Astrocyte of the cerebellum (primary cell): ENCODE measurements at regions of chr19 and their contacts with region 1.

Region 1: DNA sequence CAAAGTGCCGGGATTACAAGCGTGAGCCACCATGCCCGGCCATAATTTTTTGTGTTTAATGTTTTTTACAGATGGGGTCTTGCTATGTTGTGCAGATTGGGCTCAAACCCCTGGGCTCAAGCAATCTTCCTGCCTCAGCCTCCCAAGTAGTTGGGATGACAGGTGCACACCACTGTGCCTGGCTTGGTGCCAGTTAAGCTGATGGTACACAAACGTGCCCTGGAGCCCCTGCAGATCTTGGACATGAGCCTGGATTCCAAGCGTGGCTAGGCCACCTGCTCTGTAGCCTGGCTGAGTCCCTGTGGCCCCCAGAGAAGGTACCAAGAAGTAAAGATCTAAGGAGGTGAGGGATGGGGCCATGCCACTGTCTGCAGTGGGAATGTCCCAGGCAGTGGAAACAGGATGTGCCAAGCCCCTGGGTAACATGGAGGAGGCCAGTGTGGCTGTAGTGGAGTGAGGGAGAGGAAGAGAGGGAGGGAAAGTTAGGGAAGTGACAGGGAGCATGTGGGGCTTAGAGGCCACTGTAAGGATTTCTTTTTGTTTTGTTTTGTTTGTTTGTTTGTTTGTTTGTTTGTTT is 7.0 kb downstream of the PRODH2 start:
- DNase-seq: no peak
- H3K4me3 ChIP-seq: no peak overlapping the region
- CTCF ChIP-seq: no peak

Region 2: DNA sequence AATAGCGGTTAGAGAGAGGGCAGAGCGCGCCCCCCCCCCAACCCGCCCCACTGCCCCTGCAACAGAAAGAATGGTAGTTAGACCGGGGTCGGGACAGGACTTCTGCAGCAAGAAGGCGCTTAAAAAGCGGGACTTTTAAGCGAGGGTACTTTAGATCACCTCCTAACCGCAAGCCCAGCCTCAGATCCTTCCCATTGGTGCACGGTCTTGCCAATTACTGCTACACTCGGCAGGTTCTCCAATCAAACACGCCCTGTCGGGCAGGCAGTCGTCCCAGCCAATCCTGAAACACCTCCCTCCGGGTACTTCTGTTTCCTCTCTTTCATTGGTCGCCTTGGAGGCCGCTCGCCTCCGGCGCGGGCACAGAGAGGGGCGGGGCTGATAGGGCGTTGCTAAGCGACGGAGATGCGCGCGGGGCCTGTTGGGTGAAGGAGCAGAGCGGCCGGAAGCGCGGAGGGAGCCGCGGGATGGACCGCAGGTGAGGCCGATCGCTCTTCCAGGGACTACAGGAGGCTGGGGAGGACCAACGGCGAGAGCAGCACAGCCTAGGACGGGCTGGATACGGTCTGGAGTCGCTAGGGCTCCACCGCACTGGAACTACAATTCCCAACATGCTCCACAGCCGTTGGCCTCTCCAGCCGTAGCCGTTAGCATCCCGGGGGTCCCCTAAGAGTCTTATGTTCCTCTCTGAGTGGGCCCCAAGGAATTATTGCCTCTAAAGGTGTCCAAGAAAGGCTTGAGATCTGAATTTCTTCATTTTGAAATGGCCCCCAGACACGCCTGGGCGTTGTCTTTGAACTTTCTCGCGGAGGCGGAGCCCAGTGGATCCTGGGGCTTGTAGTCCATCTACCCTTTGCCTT is 47.6 kb before region 1 on chr19 and contains the start of gene PROSER3:
- in situ Hi-C with region 1: no loop called
- DNase-seq: peak; percentile 99
- H3K4me3 ChIP-seq: peak within 1 kb of the TSS; percentile 94
- CTCF ChIP-seq: no peak

Region 3: GRCh38 chr19:35911790-35912189 is 106.2 kb after region 1 on chr19:
- in situ Hi-C with region 1: no loop called
- DNase-seq: no peak
- H3K4me3 ChIP-seq: no peak overlapping the region
- CTCF ChIP-seq: no peak

Region 4: DNA sequence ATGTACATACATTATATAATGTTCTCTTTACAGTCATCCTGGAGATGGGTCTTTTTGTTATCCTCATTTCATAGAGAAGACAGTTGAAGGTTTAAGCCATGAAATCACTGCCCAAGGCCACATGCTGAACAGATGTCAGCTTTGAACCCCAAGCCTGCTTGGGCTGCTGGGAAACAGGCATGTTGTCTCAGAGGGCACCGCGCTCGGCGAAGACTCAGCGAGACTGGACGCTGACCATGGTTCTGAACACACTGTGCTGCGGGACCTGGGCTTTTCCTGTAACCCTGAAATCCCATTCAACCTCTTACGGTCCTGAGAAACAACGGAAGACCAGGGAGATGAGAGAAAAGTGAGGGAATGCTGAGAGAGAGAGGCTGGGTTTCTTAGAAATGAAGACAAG is 157.9 kb after region 1 on chr19:
- in situ Hi-C with region 1: loop called (anchors 10 kb)
- DNase-seq: peak; percentile 42
- H3K4me3 ChIP-seq: no peak overlapping the region
- CTCF ChIP-seq: no peak